Natural killer cell (primary cell): ENCODE measurements at regions of chr12 and their contacts with region 1.

Region 1: DNA sequence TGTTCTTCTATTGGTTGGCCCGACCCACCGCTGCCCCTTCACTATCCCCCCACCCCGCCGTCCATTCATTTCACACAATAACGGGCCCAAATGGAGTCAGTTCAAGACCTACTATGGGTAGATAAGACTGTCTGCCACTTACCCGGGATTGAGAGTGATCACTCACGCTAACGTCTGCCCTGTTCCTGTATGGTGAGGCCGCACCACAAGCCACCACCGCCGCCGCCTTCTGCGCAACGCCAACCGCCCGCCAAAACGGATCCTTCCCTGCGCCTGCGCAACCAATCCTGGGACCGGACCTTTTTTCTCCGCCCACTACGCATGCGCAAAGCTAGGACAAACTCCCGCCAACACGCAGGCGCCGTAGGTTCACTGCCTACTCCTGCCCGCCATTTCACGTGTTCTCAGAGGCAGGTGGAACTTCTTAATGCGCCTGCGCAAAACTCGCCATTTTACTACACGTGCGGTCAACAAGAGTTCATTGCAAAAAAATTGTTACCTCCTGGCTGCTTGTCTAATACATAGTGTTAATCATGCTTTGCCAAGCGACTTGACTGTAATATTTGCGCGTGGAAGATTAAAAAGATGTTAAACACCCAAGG is at the start of gene CBX5:
- DNase-seq: peak; percentile 99 to 100
- ATAC-seq: peak; percentile 44 to 74 (median 57)
- H3K4me3 ChIP-seq: peak within 1 kb of the TSS; percentile 77
- H3K4me3 Mint-ChIP-seq: no peak within 1 kb of the TSS
- H3K27ac ChIP-seq: peak within 1 kb of the TSS; percentile 94
- H3K27ac Mint-ChIP-seq: no peak within 1 kb of the TSS
- H3K4me1 ChIP-seq: peaks cover 42% of the 10 kb centered on the region
- H3K4me1 Mint-ChIP-seq: peaks cover 0 to 7% of the 10 kb centered on the region in 2 donors
- H3K27me3 ChIP-seq: no peaks in the 10 kb centered on the region
- H3K27me3 Mint-ChIP-seq: no peaks in the 10 kb centered on the region
- CTCF ChIP-seq: no peak
- total RNA-seq, gene CBX5: 30.8 to 42.3 (median 36.5) TPM

Region 2: DNA sequence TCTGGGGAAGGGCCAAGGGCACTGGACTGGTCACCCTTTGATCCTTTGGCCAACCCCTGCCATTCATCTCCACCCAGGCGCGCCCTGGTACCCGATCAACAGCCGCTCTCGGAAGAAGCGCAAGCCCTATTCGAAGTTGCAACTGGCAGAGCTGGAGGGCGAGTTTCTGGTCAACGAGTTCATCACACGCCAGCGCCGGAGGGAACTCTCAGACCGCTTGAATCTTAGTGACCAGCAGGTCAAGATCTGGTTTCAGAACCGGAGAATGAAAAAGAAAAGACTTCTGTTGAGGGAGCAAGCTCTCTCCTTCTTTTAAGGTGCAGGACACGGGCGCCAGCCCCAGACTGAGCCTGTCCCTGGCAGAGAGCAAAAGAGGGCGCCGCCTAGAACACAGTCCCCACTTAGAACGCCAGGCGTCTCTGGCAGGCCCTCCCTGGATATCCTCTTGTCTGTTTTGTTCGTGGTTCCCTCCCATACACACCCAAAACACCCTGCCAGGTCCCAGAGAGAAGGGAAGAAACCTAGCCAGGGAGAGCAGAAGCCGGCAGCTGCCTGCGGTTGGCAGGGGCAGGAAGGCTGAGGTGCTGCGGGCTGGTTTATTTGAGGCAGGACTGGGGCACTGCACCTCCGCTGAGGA is 323.6 kb before region 1 on chr12:
- intact Hi-C with region 1: loop called (anchors 5 kb)
- DNase-seq: peak in 1 of 2 donors; percentile 45
- ATAC-seq: peak in 1 of 3 donors; percentile 38
- H3K4me3 ChIP-seq: no peak overlapping the region
- H3K4me3 Mint-ChIP-seq: peak overlapping the region; percentile 13
- H3K27ac ChIP-seq: no peak overlapping the region
- H3K27ac Mint-ChIP-seq: no peak overlapping the region
- H3K4me1 ChIP-seq: peaks cover 41% of the 10 kb centered on the region
- H3K4me1 Mint-ChIP-seq: peaks cover 24 to 25% of the 10 kb centered on the region in 2 donors
- H3K27me3 ChIP-seq: peaks cover 95% of the 10 kb centered on the region
- H3K27me3 Mint-ChIP-seq: peaks cover 76 to 77% of the 10 kb centered on the region in 2 donors
- CTCF ChIP-seq: no peak

Region 3: DNA sequence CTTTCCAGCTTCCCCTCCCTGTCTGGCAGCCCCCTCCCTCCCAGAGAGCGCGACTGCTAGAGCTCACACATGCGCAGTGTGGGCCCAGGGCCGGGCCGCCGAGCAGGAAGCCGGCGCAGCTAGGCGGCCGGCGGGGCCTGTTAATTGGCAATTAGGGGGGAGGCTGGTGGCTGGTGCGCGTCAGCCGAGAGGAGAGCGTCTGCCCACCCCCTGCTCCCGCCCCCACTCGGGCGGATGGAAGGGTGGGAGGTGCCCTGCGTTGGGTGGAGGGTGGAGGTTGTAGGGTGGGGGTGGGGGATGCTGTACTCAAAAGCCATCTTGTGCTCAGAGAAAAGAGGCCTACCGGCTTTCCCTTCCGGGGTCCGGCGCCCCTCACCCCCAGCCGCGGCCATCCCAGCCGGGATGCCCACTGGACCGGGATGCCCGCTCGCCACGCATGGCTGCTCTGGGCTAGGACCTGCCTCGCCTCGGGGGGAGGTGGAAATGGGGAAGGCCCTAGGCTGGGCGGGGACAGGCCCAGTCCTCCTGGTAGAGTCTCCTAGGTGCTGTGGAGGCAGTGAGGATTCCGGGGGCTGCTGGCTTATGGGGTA is 262.0 kb before region 1 on chr12:
- intact Hi-C with region 1: loop called (anchors 10 kb)
- DNase-seq: peak; percentile 73 to 87
- ATAC-seq: peak; percentile 89 to 95 (median 90)
- H3K4me3 ChIP-seq: peak overlapping the region; percentile 55
- H3K4me3 Mint-ChIP-seq: peak overlapping the region; percentile 81
- H3K27ac ChIP-seq: peak overlapping the region; percentile 65
- H3K27ac Mint-ChIP-seq: peak overlapping the region; percentile 23 to 89
- H3K4me1 ChIP-seq: peaks cover 33% of the 10 kb centered on the region
- H3K4me1 Mint-ChIP-seq: peaks cover 14 to 37% of the 10 kb centered on the region in 2 donors
- H3K27me3 ChIP-seq: peaks cover 56% of the 10 kb centered on the region
- H3K27me3 Mint-ChIP-seq: peaks cover 39 to 55% of the 10 kb centered on the region in 2 donors
- CTCF ChIP-seq: no peak

Region 4: GRCh38 chr12:54207484-54208294 is 72.3 kb before region 1 on chr12:
- intact Hi-C with region 1: no loop called
- DNase-seq: peak; percentile 75 to 86
- ATAC-seq: peak; percentile 82 to 100 (median 97)
- H3K4me3 ChIP-seq: no peak overlapping the region
- H3K4me3 Mint-ChIP-seq: no peak overlapping the region
- H3K27ac ChIP-seq: no peak overlapping the region
- H3K27ac Mint-ChIP-seq: no peak overlapping the region
- H3K4me1 ChIP-seq: peaks cover 3% of the 10 kb centered on the region
- H3K4me1 Mint-ChIP-seq: peaks cover 5 to 10% of the 10 kb centered on the region in 2 donors
- H3K27me3 ChIP-seq: peaks cover 4% of the 10 kb centered on the region
- H3K27me3 Mint-ChIP-seq: peaks cover 31 to 36% of the 10 kb centered on the region in 2 donors
- CTCF ChIP-seq: peak; percentile 86

Region 5: GRCh38 chr12:54251667-54252284 is 28.2 kb before region 1 on chr12:
- intact Hi-C with region 1: no loop called
- DNase-seq: peak in 1 of 2 donors; percentile 72
- ATAC-seq: peak; percentile 67 to 90 (median 79)
- H3K4me3 ChIP-seq: no peak overlapping the region
- H3K4me3 Mint-ChIP-seq: no peak overlapping the region
- H3K27ac ChIP-seq: no peak overlapping the region
- H3K27ac Mint-ChIP-seq: no peak overlapping the region
- H3K4me1 ChIP-seq: no peaks in the 10 kb centered on the region
- H3K4me1 Mint-ChIP-seq: no peaks in the 10 kb centered on the region
- H3K27me3 ChIP-seq: no peaks in the 10 kb centered on the region
- H3K27me3 Mint-ChIP-seq: no peaks in the 10 kb centered on the region
- CTCF ChIP-seq: peak; percentile 70

Region 6: GRCh38 chr12:54324617-54325441 is 44.9 kb after region 1 on chr12 and contains the start of gene COPZ1:
- intact Hi-C with region 1: loop called (anchors 2 kb)
- DNase-seq: peak; percentile 89 to 97
- ATAC-seq: peak; percentile 93 to 98 (median 93)
- H3K4me3 ChIP-seq: peak within 1 kb of the TSS; percentile 65
- H3K4me3 Mint-ChIP-seq: peak within 1 kb of the TSS; percentile 100
- H3K27ac ChIP-seq: peak within 1 kb of the TSS; percentile 77
- H3K27ac Mint-ChIP-seq: peak within 1 kb of the TSS; percentile 99
- H3K4me1 ChIP-seq: peaks cover 15% of the 10 kb centered on the region
- H3K4me1 Mint-ChIP-seq: peaks cover 21 to 42% of the 10 kb centered on the region in 2 donors
- H3K27me3 ChIP-seq: no peaks in the 10 kb centered on the region
- H3K27me3 Mint-ChIP-seq: no peaks in the 10 kb centered on the region
- CTCF ChIP-seq: peak; percentile 90
- total RNA-seq, gene COPZ1: 66.3 to 83.6 (median 79.7) TPM

Region 7: GRCh38 chr12:54359033-54359761 is 79.2 kb after region 1 on chr12:
- intact Hi-C with region 1: loop called (anchors 1 kb)
- DNase-seq: peak; percentile 86 to 98
- ATAC-seq: peak; percentile 88 to 97 (median 96)
- H3K4me3 ChIP-seq: peak overlapping the region; percentile 90
- H3K4me3 Mint-ChIP-seq: no peak overlapping the region
- H3K27ac ChIP-seq: peak overlapping the region; percentile 79
- H3K27ac Mint-ChIP-seq: no peak overlapping the region
- H3K4me1 ChIP-seq: peaks cover 30% of the 10 kb centered on the region
- H3K4me1 Mint-ChIP-seq: peaks cover 4 to 8% of the 10 kb centered on the region in 2 donors
- H3K27me3 ChIP-seq: no peaks in the 10 kb centered on the region
- H3K27me3 Mint-ChIP-seq: peaks cover 0 to 3% of the 10 kb centered on the region in 2 donors
- CTCF ChIP-seq: no peak

Region 8: DNA sequence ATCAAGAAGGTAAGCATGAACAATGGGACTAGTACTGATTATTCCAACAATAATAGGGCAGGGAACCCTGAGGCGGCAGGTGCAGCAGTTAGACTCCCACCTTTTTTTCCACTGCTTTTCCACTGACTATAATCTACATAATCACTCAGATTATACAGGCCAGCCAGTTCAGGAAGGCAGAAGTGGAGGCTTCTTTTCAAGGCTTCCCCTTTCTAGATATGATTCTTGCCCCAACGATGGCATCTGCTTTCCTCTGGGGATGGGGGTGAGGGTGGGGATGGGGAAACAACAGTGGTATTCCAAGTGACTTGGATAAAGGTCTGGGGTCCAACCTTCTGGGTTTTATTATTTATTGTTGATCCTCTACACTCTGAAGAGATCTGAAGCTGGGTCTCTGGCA is 217.9 kb after region 1 on chr12:
- intact Hi-C with region 1: loop called (anchors 5 kb)
- DNase-seq: no peak
- ATAC-seq: peak in 2 of 3 donors; percentile 1 to 6
- H3K4me3 ChIP-seq: peak overlapping the region; percentile 75
- H3K4me3 Mint-ChIP-seq: peak overlapping the region; percentile 99
- H3K27ac ChIP-seq: peak overlapping the region; percentile 74
- H3K27ac Mint-ChIP-seq: peak overlapping the region; percentile 83 to 92
- H3K4me1 ChIP-seq: peaks cover 19% of the 10 kb centered on the region
- H3K4me1 Mint-ChIP-seq: peaks cover 35 to 51% of the 10 kb centered on the region in 2 donors
- H3K27me3 ChIP-seq: no peaks in the 10 kb centered on the region
- H3K27me3 Mint-ChIP-seq: no peaks in the 10 kb centered on the region
- CTCF ChIP-seq: no peak

Region 9: DNA sequence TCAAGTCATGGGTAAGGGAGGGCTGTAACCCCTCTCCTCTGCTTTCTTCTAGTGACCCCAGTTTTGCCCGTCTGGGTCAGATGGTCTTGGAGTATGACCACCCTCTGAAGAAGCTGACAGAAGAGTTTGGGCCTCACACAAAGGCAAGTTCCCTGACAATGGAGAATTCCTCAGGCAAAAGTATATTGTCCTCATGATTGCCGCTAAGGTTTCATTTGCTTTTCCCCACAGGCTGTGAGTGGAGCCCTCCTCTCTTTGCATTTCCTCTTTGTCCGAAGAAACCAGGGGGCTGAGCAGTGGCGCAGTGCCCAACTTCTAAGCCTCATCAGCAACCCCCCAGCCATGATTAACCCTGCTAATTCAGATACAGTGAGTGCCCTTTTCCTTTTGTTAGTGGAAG is 229.7 kb after region 1 on chr12:
- intact Hi-C with region 1: no loop called
- DNase-seq: no peak
- ATAC-seq: no peak
- H3K4me3 ChIP-seq: no peak overlapping the region
- H3K4me3 Mint-ChIP-seq: no peak overlapping the region
- H3K27ac ChIP-seq: no peak overlapping the region
- H3K27ac Mint-ChIP-seq: no peak overlapping the region
- H3K4me1 ChIP-seq: no peaks in the 10 kb centered on the region
- H3K4me1 Mint-ChIP-seq: peaks cover 11 to 22% of the 10 kb centered on the region in 2 donors
- H3K27me3 ChIP-seq: no peaks in the 10 kb centered on the region
- H3K27me3 Mint-ChIP-seq: no peaks in the 10 kb centered on the region
- CTCF ChIP-seq: no peak